Dorsolateral prefrontal cortex (tissue), 120 donors: ENCODE measurements at regions of chr14 and their contacts with region 1.

Region 1: DNA sequence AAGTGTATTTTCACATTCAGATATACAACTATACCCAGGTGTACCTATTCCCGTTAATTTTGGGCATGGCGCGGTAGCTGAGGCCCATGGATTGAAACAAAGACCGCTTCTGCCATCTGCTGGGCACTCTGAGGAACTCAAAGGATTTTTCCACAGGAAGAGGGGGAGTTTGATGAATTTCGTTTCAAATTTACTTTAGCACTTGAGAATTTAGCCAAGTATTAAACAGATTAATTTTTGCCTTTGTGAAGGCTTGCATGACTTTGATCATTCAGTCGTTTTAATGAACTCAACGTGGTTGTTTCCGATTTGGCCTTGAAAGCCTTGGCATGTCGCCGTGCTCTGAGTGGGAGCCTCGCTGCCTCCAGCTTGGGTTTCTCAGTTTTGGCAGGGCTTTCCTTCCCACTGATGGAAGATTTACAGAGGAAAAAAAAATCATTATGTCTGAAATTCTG is 153.2 kb upstream of the DDHD1 start:
- DNase-seq: peak; percentile 51 to 75 (median 70)
- H3K4me3 ChIP-seq: peak overlapping the region; percentile 11 to 71 (median 54)
- H3K27ac ChIP-seq: peak overlapping the region; percentile 78 to 100 (median 96)
- H3K27me3 ChIP-seq: no peaks in the 10 kb centered on the region
- CTCF ChIP-seq: peak; percentile 43 to 94 (median 88)

Region 2: GRCh38 chr14:52552063-52552988 is 754.0 kb before region 1 on chr14 and contains the starts of genes GPR137C and TXNDC16:
- intact Hi-C with region 1: loop called in 1 of 2 experiments (anchors 10 kb)
- DNase-seq: peak; percentile 100
- H3K4me3 ChIP-seq: peak within 1 kb of the TSS; percentile 75 to 100 (median 95)
- H3K27ac ChIP-seq: peak within 1 kb of the TSS; percentile 16 to 95 (median 88)
- H3K27me3 ChIP-seq: no peaks in the 10 kb centered on the region
- CTCF ChIP-seq: peak in 12 of 56 donors; percentile 2 to 48 (median 20)
- total RNA-seq, gene GPR137C: 9.7 to 41.2 (median 21.6) TPM
- total RNA-seq, gene TXNDC16: 16.1 to 34.2 (median 24.0) TPM

Region 3: DNA sequence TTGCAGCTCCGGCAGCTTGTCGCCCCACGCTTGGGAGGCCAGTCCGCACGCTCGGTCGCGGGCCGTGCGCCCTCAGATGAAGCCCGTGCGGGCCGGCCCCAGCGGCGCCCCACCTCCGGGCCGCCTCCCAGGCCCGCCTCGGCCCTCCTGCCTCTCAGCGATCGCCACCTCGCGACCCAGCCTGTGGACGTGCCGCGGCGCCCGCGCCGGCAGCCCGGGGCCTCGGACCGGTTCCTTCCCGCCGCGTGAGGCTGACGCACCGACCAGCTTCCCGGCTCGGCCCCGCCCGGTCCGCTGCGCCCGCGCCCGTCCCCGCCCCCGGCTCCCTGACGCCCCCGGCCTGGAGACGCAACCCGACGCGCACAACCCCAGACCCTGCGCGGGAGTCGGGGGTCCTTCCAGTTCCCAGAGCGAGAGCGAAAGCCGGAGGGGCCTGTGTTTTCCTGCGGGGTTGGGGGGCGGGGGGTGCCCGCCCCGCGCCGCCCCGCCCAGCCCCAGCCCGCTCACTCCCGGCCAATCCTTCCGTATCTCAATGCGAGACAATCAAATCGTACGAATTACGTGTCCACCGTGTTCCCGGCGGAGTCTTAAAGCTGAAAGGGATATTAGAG is 610.7 kb before region 1 on chr14 and contains the start of gene ERO1A:
- intact Hi-C with region 1: loop called in 1 of 2 experiments (anchors 5 kb)
- DNase-seq: peak; percentile 54 to 85 (median 66)
- H3K4me3 ChIP-seq: peak within 1 kb of the TSS; percentile 75 to 99 (median 93)
- H3K27ac ChIP-seq: peak within 1 kb of the TSS; percentile 56 to 98 (median 90)
- H3K27me3 ChIP-seq: no peaks in the 10 kb centered on the region
- CTCF ChIP-seq: peak in 3 of 56 donors; percentile 7 to 30 (median 9)
- total RNA-seq, gene ERO1A: 23.4 to 69.4 (median 42.5) TPM

Region 4: GRCh38 chr14:52824507-52824906 is 481.8 kb before region 1 on chr14:
- intact Hi-C with region 1: loop called (anchors 2 to 5 kb)
- DNase-seq: no peak
- H3K4me3 ChIP-seq: peak overlapping the region in 3 of 59 donors; percentile 7 to 19 (median 18)
- H3K27ac ChIP-seq: no peak overlapping the region
- H3K27me3 ChIP-seq: no peaks in the 10 kb centered on the region
- CTCF ChIP-seq: no peak

Region 5: DNA sequence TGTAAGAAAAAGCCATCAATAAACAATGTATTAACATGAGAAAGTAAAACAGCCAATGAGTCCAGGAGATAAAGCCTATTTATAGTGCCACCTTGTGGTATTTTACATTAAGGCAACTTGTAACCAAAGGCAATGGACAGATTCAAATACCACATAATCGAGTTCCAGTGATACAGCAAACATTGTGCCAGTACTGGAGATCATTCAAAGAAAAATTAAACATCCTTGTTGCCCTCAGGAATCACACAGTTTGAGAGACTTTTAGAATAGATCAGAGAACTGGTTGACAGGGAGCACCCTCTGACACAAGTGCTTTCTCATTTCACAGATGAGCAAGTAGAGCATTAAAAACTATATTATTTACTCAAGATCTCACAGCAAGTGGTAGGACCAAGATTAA is 251.3 kb before region 1 on chr14:
- intact Hi-C with region 1: loop called in 1 of 2 experiments (anchors 10 kb)
- DNase-seq: no peak
- H3K4me3 ChIP-seq: no peak overlapping the region
- H3K27ac ChIP-seq: peak overlapping the region in 29 of 59 donors; percentile 5 to 73 (median 44)
- H3K27me3 ChIP-seq: no peaks in the 10 kb centered on the region
- CTCF ChIP-seq: peak; percentile 65 to 94 (median 83)

Region 6: GRCh38 chr14:53152890-53153701 is 153.2 kb before region 1 on chr14 and contains the start of gene DDHD1:
- intact Hi-C with region 1: loop called (anchors 5 kb)
- DNase-seq: peak; percentile 58 to 88 (median 68)
- H3K4me3 ChIP-seq: peak within 1 kb of the TSS; percentile 65 to 98 (median 90)
- H3K27ac ChIP-seq: peak within 1 kb of the TSS; percentile 42 to 96 (median 89)
- H3K27me3 ChIP-seq: no peaks in the 10 kb centered on the region
- CTCF ChIP-seq: peak in 15 of 56 donors; percentile 7 to 46 (median 20)
- total RNA-seq, gene DDHD1: 26.9 to 70.6 (median 49.7) TPM

Region 7: GRCh38 chr14:53696217-53696965 is 390.1 kb after region 1 on chr14:
- intact Hi-C with region 1: no loop called
- DNase-seq: no peak
- H3K4me3 ChIP-seq: no peak overlapping the region
- H3K27ac ChIP-seq: no peak overlapping the region
- H3K27me3 ChIP-seq: peaks cover 0 to 5% (median 0%) of the 10 kb centered on the region in 45 donors
- CTCF ChIP-seq: no peak